ENCODE measurements at regions of chr6 and their contacts with region 1.

Region 1: DNA sequence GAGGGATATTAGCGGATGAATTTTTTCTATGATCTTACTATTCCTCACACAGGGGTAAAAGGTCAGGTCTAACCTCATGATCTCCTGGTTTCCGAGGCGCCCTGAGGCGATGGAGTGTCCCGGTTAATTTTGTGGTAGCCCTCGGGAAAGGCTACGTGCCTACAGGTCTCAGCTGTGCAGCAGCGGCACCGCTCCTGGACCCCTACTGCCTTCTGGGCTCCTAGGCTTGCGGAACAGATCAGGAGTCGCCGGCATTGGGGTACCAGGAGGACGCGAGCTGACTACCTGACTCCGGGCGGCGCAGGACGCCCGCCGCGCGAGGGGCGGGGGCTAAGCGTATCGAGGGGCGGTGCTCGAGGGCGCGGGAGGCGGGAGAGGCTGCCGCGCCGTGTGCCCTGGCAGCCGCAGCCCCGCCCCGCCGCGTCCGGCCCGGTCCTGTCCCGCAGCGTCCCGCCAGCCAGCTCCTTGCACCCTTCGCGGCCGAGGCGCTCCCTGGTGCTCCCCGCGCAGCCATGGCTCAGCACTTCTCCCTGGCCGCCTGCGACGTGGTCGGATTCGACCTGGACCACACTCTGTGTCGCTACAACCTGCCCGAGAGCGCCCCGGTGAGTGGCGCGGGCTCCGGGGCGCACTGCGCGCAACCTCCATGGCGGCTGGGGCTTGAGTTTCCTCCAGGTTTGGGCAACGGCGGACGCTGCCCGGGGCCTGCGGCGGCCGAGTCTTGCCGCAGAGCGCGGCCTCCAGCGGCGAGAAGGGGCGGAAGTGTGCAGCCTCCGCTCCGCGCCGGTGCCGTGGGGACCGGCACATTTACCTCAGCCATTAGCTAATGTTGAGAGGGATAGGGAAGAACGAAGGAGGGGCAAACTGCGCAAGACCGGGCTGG is at the start of gene NT5DC1:
- DNase-seq: peak; percentile 79
- ATAC-seq: peak; percentile 92
- H3K4me3 ChIP-seq: peak within 1 kb of the TSS; percentile 68 to 93 (median 92)
- H3K27ac ChIP-seq: peak within 1 kb of the TSS; percentile 90
- H3K4me1 ChIP-seq: peaks cover 61% of the 10 kb centered on the region
- H3K27me3 ChIP-seq: no peaks in the 10 kb centered on the region; a peak in 1 of 5 replicates
- CTCF ChIP-seq: peak; percentile 68
- EP300 ChIP-seq: peak in 1 of 2 experiments; percentile 9; a peak in 1 of 4 replicates
- POLR2A ChIP-seq: peak; percentile 93 to 98
- RAD21 ChIP-seq: peak; percentile 84
- total RNA-seq, gene NT5DC1: 56.1 and 90.6 TPM in 2 replicates

Region 2: DNA sequence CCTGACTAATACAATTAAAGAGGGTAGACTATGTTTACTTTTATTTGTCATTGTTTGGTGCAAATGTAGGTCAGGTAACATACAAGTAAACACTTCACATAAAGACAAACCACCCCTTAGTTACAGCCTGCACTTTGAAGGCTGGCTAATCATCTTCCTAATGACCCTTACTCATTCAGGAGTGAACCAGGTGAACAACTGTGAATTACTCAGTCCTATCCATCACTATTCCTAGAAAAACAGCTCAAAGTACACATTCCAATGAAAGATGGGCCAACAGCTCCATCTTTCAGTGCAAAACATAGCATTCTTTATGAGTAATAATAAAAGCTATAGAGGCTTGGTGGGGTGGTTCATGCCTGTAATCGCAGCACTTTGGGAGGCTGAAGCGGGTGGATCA is 118.2 kb before region 1 on chr6:
- CTCF ChIA-PET with region 1: no interaction called
- POLR2A ChIA-PET with region 1: interaction called, 12 read pairs
- in situ Hi-C with region 1: no loop called
- intact Hi-C with region 1: no loop called
- DNase-seq: peak; percentile 75
- ATAC-seq: peak; percentile 92
- H3K4me3 ChIP-seq: no peak overlapping the region
- H3K27ac ChIP-seq: no peak overlapping the region
- H3K4me1 ChIP-seq: peaks cover 28% of the 10 kb centered on the region
- H3K27me3 ChIP-seq: no peaks in the 10 kb centered on the region
- CTCF ChIP-seq: peak; percentile 56
- EP300 ChIP-seq: no peak
- POLR2A ChIP-seq: no peak
- RAD21 ChIP-seq: no peak

Region 3: GRCh38 chr6:116016846-116017545 is 83.7 kb before region 1 on chr6:
- CTCF ChIA-PET with region 1: interaction called, 68 read pairs
- POLR2A ChIA-PET with region 1: interaction called, 14 read pairs
- in situ Hi-C with region 1: loop called (anchors 5 kb)
- intact Hi-C with region 1: no loop called
- DNase-seq: peak; percentile 56
- ATAC-seq: peak; percentile 81
- H3K4me3 ChIP-seq: peak overlapping the region; percentile 21 to 38 (median 34); a peak in 5 of 6 replicates
- H3K27ac ChIP-seq: peak overlapping the region; percentile 70
- H3K4me1 ChIP-seq: peaks cover 78% of the 10 kb centered on the region
- H3K27me3 ChIP-seq: no peaks in the 10 kb centered on the region
- CTCF ChIP-seq: no peak
- EP300 ChIP-seq: peak in 1 of 2 experiments; percentile 74; a peak in 1 of 4 replicates
- POLR2A ChIP-seq: no peak
- RAD21 ChIP-seq: no peak

Region 4: DNA sequence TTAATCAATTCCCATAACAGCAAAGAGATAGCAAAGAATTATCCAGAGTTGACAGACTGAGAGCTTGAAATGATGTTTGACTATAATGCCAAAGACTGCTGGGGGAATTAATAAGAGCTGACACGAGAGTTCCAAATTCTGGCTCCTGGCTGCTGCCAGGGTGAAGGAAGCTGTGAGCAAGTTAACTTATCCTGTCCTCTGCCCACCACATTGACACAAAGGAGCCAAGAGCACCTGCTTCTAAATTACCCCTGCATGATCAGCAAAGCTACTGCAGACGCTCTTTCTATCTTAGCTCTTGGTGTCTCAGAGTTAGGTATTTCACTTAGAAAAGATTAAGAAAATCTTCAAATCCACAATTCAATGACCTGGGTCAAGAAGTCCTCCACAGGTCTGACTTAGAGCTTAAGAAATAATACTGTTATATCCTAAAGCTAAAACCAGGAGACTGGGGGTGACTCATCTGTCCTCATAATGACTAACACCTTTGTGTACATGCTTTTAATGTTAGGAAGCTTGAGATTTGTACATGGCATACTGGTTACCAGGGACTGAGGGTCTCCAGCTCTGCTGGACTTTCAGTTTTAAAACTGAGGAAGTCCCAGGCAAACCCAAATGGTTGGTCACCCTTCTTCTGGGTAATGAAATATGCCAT is 26.8 kb before region 1 on chr6:
- CTCF ChIA-PET with region 1: no interaction called
- POLR2A ChIA-PET with region 1: interaction called, 21 read pairs
- in situ Hi-C with region 1: no loop called
- intact Hi-C with region 1: no loop called
- DNase-seq: peak; percentile 75
- ATAC-seq: peak; percentile 84
- H3K4me3 ChIP-seq: no peak overlapping the region
- H3K27ac ChIP-seq: no peak overlapping the region
- H3K4me1 ChIP-seq: peaks cover 58% of the 10 kb centered on the region
- H3K27me3 ChIP-seq: no peaks in the 10 kb centered on the region
- CTCF ChIP-seq: no peak
- EP300 ChIP-seq: peak in 1 of 2 experiments; percentile 67; a peak in 1 of 4 replicates
- POLR2A ChIP-seq: no peak
- RAD21 ChIP-seq: no peak

Region 5: GRCh38 chr6:116139917-116140316 is 39.3 kb after region 1 on chr6:
- CTCF ChIA-PET with region 1: no interaction called
- POLR2A ChIA-PET with region 1: no interaction called
- in situ Hi-C with region 1: no loop called
- intact Hi-C with region 1: no loop called
- DNase-seq: peak; percentile 16
- ATAC-seq: peak; percentile 80
- H3K4me3 ChIP-seq: no peak overlapping the region
- H3K27ac ChIP-seq: no peak overlapping the region
- H3K4me1 ChIP-seq: peaks cover 9% of the 10 kb centered on the region
- H3K27me3 ChIP-seq: no peaks in the 10 kb centered on the region
- CTCF ChIP-seq: peak; percentile 43
- EP300 ChIP-seq: no peak
- POLR2A ChIP-seq: no peak
- RAD21 ChIP-seq: no peak

Region 6: GRCh38 chr6:116238083-116238482 is 137.4 kb after region 1 on chr6:
- CTCF ChIA-PET with region 1: no interaction called
- POLR2A ChIA-PET with region 1: no interaction called
- in situ Hi-C with region 1: no loop called
- intact Hi-C with region 1: no loop called
- DNase-seq: no peak
- ATAC-seq: no peak
- H3K4me3 ChIP-seq: no peak overlapping the region
- H3K27ac ChIP-seq: no peak overlapping the region
- H3K4me1 ChIP-seq: no peaks in the 10 kb centered on the region
- H3K27me3 ChIP-seq: no peaks in the 10 kb centered on the region
- CTCF ChIP-seq: no peak
- EP300 ChIP-seq: no peak
- POLR2A ChIP-seq: no peak
- RAD21 ChIP-seq: no peak

Region 7: DNA sequence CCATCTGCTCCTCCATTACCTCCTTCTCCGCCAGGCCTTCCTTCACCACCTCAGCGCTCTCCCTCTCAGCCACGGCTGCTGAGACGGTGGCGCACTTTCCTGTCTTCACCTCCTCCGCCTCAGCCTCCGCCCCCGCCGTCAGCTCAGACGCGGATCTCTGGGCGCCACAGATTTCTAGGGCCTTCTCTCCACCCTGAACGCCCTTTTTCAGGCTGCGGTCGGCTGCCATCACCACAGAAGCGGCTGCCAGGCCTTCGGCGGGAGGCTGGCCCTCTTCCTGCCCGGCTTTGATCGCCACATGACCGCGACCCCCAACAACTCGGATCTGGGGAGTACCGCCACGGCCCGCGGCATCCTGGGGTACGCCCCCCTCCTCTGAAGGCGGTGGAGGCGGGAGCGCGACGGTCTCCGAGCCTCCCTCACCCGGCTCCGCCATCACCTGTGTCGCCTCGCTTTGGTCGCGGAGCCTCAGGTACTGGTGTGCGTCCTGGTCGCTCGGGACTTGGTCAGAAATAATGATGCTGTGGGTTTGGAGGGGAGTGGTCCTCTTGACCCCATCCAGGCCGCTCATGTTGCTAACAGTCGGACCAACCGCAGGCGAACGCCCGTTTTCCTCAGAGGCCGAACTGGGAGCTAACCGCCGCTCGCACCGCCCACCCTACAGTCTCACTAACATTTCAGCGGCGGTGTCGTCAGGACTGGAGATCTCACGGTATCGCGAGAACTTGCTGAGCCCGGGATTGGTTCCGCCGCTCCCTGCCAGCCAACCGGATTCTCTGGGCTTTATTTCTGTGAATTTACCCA is 178.8 kb after region 1 on chr6 and contains the start of gene TSPYL1:
- CTCF ChIA-PET with region 1: no interaction called
- POLR2A ChIA-PET with region 1: interaction called, 3 read pairs
- in situ Hi-C with region 1: no loop called
- intact Hi-C with region 1: loop called (anchors 10 kb)
- DNase-seq: peak; percentile 97
- ATAC-seq: peak; percentile 96
- H3K4me3 ChIP-seq: peak within 1 kb of the TSS; percentile 82 to 97 (median 87)
- H3K27ac ChIP-seq: peak within 1 kb of the TSS; percentile 87
- H3K4me1 ChIP-seq: peaks cover 49% of the 10 kb centered on the region
- H3K27me3 ChIP-seq: no peaks in the 10 kb centered on the region; a peak in 1 of 5 replicates
- CTCF ChIP-seq: peak; percentile 59
- EP300 ChIP-seq: peak in 1 of 2 experiments; percentile 73; a peak in 2 of 4 replicates
- POLR2A ChIP-seq: peak; percentile 95 to 96
- RAD21 ChIP-seq: peak; percentile 28; the same call in 1 of the 2 replicates
- total RNA-seq, gene TSPYL1: 93.0 and 102 TPM in 2 replicates

Region 8: DNA sequence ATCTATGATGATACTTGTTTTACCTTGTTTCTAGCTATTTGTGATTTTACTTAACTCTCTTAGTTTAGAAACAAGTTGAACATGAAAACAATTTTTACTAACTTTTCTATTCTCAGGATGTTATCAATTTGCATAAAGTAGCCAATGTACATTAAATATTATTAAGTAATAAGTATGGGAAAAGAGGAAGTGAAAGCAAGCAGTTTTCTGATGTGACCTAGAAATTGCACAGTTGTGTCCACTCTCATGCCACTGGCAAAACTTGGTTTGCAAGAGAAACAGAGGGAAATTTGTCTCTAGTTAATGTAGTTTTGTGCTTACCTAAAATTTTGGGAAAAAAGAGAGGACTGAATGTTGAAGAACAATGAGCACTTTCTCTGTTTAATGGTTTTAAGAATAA is 198.3 kb after region 1 on chr6:
- CTCF ChIA-PET with region 1: no interaction called
- POLR2A ChIA-PET with region 1: no interaction called
- in situ Hi-C with region 1: no loop called
- intact Hi-C with region 1: no loop called
- DNase-seq: no peak
- ATAC-seq: no peak
- H3K4me3 ChIP-seq: no peak overlapping the region
- H3K27ac ChIP-seq: no peak overlapping the region
- H3K4me1 ChIP-seq: no peaks in the 10 kb centered on the region
- H3K27me3 ChIP-seq: no peaks in the 10 kb centered on the region
- CTCF ChIP-seq: no peak
- EP300 ChIP-seq: no peak
- POLR2A ChIP-seq: no peak
- RAD21 ChIP-seq: no peak